Mammary epithelial cell (primary cell): ENCODE measurements at regions of chr9 and their contacts with region 1.

Region 1: DNA sequence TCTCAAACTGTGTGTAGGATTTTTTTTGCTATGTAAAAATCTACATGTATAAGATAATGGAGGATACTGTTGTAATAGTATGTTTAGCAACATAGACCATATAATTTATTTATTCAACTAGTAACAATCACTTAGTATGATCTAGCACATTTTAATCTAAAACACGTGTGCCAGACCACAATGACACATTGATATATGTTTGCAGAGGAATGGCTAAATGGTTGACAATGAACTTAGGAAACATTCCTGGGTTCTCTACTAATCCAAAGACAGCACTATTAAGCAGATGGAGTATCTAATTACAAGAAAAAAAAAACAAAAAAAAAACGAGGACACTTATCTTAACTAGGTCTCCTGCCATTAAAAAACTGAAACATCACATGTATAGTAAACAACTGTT is 261.7 kb upstream of the PAPPA start:
- DNase-seq: peak; percentile 3
- H3K4me3 ChIP-seq: no peak overlapping the region
- H3K27ac ChIP-seq: no peak overlapping the region
- H3K4me1 ChIP-seq: no peaks in the 10 kb centered on the region
- H3K27me3 ChIP-seq: no peaks in the 10 kb centered on the region
- CTCF ChIP-seq: no peak

Region 2: GRCh38 chr9:115997923-115998322 is 106.0 kb after region 1 on chr9:
- CTCF ChIA-PET with region 1: no interaction called
- dilution Hi-C with region 1: no loop called
- in situ Hi-C with region 1: no loop called
- intact Hi-C with region 1: no loop called
- DNase-seq: peak; percentile 28
- H3K4me3 ChIP-seq: no peak overlapping the region
- H3K27ac ChIP-seq: no peak overlapping the region
- H3K4me1 ChIP-seq: peaks cover 37% of the 10 kb centered on the region
- H3K27me3 ChIP-seq: no peaks in the 10 kb centered on the region
- CTCF ChIP-seq: no peak

Region 3: GRCh38 chr9:116042321-116042720 is 150.4 kb after region 1 on chr9:
- CTCF ChIA-PET with region 1: no interaction called
- dilution Hi-C with region 1: no loop called
- in situ Hi-C with region 1: no loop called
- intact Hi-C with region 1: no loop called
- DNase-seq: no peak
- H3K4me3 ChIP-seq: no peak overlapping the region
- H3K27ac ChIP-seq: no peak overlapping the region
- H3K4me1 ChIP-seq: peaks cover 16% of the 10 kb centered on the region
- H3K27me3 ChIP-seq: no peaks in the 10 kb centered on the region
- CTCF ChIP-seq: no peak

Region 4: GRCh38 chr9:116566677-116567488 is 675.0 kb after region 1 on chr9:
- CTCF ChIA-PET with region 1: no interaction called
- dilution Hi-C with region 1: no loop called
- in situ Hi-C with region 1: loop called (anchors 10 to 25 kb)
- intact Hi-C with region 1: no loop called
- DNase-seq: no peak
- H3K4me3 ChIP-seq: no peak overlapping the region
- H3K27ac ChIP-seq: no peak overlapping the region
- H3K4me1 ChIP-seq: peaks cover 14% of the 10 kb centered on the region
- H3K27me3 ChIP-seq: no peaks in the 10 kb centered on the region
- CTCF ChIP-seq: no peak